Left ventricle myocardium superior (tissue), 1 donor: ENCODE measurements at regions of chr10 and their contacts with region 1.

Region 1: DNA sequence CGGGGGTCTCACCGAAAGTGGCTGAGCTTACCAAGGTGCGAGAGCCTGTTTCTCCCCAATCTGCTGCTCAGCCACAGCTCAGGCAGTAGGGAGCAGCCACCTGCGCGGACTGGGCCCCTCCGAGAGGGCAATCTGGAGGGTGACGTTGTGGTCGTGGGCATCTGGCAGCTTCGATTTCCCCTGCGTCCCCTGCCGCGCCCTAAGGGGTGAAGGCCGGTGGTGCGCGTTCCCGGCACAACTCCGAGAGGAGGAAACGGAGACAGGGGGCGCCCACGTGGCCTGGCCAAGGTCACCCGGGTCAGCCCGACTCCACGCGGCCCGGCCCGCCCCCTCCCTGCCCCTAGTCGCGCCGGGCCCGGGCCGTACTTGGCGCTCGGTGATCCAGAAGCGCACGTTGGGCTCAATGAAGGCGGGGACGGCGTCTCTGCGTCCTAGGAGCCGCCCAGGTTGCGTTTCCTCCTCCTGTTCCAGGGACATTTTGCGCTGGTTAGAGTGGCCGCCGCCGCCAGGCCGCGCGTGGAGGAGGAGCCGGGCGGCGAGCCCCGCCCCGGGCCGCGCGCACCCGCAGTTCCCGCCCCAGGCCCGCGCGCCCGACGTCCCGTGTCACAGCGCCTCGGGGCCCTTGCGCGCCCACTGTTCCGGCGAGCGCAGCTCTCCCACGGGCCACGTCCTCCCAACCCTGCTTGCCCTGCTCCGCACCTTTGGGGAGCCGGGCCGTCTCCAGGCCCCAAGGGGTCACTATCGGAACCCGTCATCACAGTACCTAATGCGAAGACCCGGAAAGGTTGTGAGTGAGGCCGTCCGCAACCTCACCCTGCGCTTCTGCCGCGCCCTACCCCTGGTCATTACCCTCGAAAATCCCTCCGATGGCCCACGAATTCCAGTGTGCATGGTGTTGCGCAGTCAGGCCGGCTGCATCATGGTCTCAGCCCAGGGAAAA is at the start of gene SFXN4:
- DNase-seq: peak; percentile 91
- ATAC-seq: peak; percentile 96
- total RNA-seq, gene SFXN4: 43.0 TPM

Region 2: GRCh38 chr10:119030421-119031250 is 134.8 kb before region 1 on chr10:
- intact Hi-C with region 1: no loop called
- DNase-seq: peak; percentile 72
- ATAC-seq: peak; percentile 2

Region 3: GRCh38 chr10:119079632-119080520 is 85.6 kb before region 1 on chr10:
- intact Hi-C with region 1: loop called (anchors 10 kb)
- DNase-seq: peak; percentile 85
- ATAC-seq: peak; percentile 89

Region 4: GRCh38 chr10:119281581-119282071 is 116.2 kb after region 1 on chr10:
- intact Hi-C with region 1: no loop called
- DNase-seq: peak; percentile 92
- ATAC-seq: peak; percentile 70